Breast epithelium (tissue), 4 donors: ENCODE measurements at regions of chr4 and their contacts with region 1.

Region 1: GRCh38 chr4:107304699-107305286 is 268.7 kb upstream of the DKK2 start:
- DNase-seq: no peak
- H3K4me3 ChIP-seq: no peak overlapping the region
- H3K27ac ChIP-seq: no peak overlapping the region
- H3K4me1 ChIP-seq: no peaks in the 10 kb centered on the region
- H3K27me3 ChIP-seq: no peaks in the 10 kb centered on the region
- CTCF ChIP-seq: no peak
- POLR2A ChIP-seq: no peak

Region 2: GRCh38 chr4:106687026-106687425 is 617.8 kb before region 1 on chr4:
- intact Hi-C with region 1: loop called (anchors 5 kb)
- DNase-seq: no peak
- H3K4me3 ChIP-seq: no peak overlapping the region
- H3K27ac ChIP-seq: no peak overlapping the region
- H3K4me1 ChIP-seq: no peaks in the 10 kb centered on the region
- H3K27me3 ChIP-seq: no peaks in the 10 kb centered on the region
- CTCF ChIP-seq: no peak
- POLR2A ChIP-seq: no peak